HEK293 (cell line): ENCODE measurements at regions of chr1 and their contacts with region 1.

Region 1: DNA sequence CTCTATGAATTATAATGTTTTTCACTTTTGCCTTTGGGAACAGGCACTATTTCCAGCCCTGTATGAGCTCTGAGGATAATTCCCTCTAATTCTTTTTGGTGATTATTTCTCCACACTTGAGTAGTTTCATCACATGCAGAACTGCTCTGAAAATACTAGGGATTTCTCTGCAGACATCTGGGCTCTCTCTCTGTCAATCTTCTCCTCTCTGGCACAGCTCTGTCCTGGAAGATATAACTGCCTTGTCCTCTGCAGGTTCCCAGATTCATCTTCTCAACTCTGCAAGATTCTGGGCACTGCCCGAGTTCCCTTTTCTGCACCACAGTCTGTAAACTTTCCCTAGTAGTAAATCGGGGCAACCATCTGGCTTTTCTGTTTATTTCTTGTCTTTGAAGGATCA is 131.3 kb upstream of the FMN2 start:
- H3K4me3 ChIP-seq: no peak overlapping the region
- H3K27ac ChIP-seq: no peak overlapping the region
- H3K4me1 ChIP-seq: no peaks in the 10 kb centered on the region
- CTCF ChIP-seq: no peak

Region 2: DNA sequence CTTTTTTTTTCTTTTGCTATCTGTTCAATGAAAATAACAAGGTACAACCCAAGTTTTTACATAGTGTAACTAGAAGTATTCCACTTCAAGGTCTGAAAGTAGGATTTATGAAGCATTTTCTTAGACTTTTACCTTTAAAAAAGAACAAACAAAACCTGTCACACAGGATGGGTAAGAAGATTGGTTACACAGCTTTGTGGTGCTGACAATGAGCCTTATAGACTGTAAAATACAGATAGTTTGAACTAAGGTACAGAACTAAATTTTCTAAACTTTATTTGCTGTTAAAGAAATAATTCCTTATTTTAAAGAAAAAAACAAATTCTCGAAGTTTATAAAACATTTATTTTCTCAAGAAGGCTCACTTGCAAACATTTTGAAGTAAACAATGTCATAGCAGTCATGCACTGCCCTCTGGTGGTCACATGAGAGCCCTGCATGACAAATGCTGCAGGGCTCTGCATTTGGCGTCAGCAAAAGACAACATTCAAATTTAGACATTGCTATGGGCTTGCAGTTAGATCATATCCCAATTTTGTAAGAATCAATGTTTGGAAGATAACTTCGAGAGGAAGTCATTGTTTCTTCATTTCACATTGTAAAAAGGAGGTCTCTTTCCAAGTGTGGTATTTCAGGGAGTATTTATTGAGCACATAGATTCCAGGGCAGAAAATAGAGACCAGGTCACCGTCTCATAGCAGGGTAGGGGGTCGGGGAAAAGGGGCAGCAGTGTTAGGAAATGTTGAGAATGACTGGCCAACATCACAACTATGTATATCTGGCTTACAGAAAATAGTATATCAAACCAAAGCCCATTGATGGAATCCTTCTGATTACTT is 16.0 kb after region 1 on chr1:
- CTCF ChIA-PET with region 1: interaction called, 187 read pairs
- POLR2A ChIA-PET with region 1: no interaction called
- H3K4me3 ChIP-seq: no peak overlapping the region
- H3K27ac ChIP-seq: no peak overlapping the region
- H3K4me1 ChIP-seq: no peaks in the 10 kb centered on the region
- CTCF ChIP-seq: peak; percentile 54